Dendritic cell treated with granulocyte-macrophage colony-stimulating factor and Interleukin-4, amounts not matched to agents 40 ng/mL and 50 ng/mL, for 4 days (primary cell): ENCODE measurements at regions of chr12 and their contacts with region 1.

Region 1: GRCh38 chr12:27733052-27733656 is 22.5 kb downstream of the MRPS35 start:
- H3K4me3 Mint-ChIP-seq: no peak overlapping the region
- H3K27ac Mint-ChIP-seq: no peak overlapping the region
- H3K4me1 Mint-ChIP-seq: no peaks in the 10 kb centered on the region
- H3K27me3 Mint-ChIP-seq: no peaks in the 10 kb centered on the region

Region 2: DNA sequence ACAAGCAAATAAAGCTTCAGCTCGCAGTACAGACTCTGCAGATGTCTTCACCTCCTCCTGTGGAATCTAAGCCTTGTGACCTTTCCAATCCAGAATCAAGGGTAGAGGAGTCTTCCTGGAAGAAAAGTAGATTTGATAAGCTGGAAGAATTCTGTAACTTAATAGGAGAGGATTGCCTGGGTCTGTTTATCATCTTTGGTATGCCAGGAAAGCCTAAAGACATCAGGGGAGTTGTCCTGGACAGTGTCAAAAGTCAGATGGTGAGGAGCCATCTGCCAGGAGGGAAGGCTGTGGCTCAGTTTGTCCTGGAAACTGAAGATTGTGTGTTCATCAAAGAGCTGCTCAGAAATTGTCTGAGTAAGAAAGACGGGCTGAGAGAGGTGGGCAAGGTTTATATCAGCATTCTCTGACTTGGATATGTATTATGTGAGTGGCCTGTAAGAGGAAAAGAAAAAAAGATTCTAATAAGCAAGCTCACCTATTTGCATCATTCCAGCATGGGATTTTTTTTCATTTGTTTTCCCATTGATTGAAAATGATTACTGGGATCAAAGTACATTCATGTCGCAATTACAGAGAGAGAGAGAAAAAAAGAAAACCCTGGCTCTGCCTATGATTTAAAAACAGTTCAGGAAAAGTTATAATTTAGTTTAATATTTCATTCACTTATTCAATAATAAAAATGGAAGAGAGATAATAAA is 36.1 kb before region 1 on chr12:
- intact Hi-C with region 1: no loop called
- H3K4me3 Mint-ChIP-seq: no peak overlapping the region
- H3K27ac Mint-ChIP-seq: no peak overlapping the region
- H3K4me1 Mint-ChIP-seq: no peaks in the 10 kb centered on the region
- H3K27me3 Mint-ChIP-seq: no peaks in the 10 kb centered on the region

Region 3: DNA sequence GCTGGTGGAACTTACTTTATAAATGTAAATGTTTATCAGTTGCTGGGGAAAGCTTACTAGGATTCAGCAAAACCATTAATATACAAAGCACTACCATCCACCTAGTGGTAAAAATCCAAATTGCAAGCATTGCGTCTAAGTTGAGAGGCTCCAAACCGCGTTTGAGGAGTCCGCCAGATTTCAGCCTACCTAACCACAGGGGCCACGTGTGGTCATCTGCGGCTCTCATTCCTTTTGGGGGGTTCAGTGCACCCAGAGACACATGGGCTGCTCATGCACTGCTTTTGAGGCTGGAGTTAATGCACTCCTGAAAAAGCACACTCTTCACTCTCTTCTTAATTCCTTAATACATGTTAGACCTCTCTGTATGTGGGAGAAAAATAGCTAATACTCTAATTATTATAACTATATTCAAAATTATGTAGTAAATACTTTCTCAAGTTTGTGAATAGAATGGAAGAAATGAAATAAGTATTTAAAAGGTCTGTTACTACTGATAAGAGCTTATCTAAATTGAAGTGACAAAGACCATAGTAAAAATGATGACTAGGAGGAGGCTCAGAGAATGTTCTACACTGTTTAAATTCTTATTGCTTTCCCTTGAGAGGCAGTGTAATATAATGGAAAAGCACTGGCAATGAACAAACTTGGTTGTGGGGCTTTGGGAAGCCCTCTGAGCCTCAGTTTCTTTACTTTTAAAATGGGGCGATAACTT is 88.3 kb after region 1 on chr12:
- intact Hi-C with region 1: loop called (anchors 1 kb)
- H3K4me3 Mint-ChIP-seq: no peak overlapping the region
- H3K27ac Mint-ChIP-seq: no peak overlapping the region
- H3K4me1 Mint-ChIP-seq: no peaks in the 10 kb centered on the region
- H3K27me3 Mint-ChIP-seq: peaks cover 5% of the 10 kb centered on the region

Region 4: DNA sequence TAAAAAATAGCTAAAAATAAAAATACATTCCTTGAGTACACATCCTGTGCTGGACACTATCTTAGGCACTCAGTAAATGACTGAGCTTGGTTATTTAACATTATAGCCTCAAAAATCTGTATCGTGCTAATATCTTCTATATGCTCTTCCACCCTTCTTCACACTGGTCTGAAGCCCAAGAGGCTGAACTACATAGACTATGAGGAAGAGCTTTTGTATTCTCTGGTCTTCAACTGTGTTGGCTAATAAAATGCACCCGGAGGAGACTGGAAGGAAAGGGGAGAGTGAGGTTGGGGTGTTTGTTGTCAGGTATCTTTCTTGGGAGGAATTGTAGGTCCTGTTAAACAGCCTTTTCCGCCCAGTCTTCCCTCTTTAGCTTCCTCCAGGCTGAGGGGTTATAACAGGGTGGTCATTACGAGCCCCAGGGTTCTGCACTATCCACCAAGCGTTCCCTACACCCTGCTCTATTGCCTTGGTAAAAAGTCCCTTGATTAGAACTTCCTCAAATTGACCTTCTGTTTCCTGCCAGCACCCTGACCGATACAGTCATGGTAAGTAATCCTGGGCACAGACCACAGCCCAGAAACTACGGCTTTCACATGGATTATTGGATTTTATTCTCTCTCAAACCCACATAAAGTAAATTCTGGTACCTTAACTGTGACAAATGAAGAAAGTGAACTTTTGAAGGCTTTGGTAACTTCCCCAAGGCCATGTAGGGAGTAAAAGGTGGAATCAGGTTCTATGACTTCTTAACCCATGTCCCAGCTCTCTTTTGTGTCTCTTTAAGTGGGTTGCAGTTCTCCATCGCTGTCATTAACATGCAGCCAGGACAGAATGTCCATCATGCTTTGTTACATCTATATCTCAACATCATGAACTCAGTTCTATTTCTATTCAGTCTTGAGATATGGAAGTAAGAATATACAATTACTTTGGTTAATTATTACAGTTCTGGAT is 168.0 kb after region 1 on chr12:
- intact Hi-C with region 1: no loop called
- H3K4me3 Mint-ChIP-seq: no peak overlapping the region
- H3K27ac Mint-ChIP-seq: no peak overlapping the region
- H3K4me1 Mint-ChIP-seq: no peaks in the 10 kb centered on the region
- H3K27me3 Mint-ChIP-seq: no peaks in the 10 kb centered on the region

Region 5: DNA sequence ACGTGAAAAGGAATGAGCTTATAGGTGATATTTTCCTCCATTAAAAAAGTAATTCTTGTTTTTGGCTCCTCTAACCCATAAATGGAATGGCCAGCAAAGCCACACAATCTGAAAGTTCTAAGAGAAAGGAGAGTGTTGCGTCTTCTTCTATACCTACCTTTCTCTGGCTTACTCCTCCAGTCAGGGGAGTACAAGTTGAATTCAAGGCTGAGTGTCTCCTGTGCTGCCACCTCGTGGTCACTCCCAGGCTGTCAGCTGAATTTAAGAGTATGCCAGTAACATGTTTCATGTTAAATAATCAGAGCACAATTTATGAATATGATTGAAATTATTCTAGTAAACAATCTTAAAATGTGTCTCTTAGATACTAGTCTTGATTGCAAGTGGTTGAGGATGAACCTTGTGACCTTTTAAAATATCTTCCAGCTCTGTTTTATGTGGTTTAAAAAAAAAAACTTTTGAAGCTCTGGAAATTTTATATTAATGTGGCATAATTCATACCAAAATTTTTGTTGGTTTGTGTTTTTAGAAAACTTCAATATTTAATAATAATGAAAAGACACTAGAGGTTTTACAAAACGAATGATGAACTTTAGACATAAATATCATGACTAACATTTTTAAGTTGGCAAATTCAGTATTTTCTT is 207.7 kb after region 1 on chr12:
- intact Hi-C with region 1: loop called (anchors 2 kb)
- H3K4me3 Mint-ChIP-seq: no peak overlapping the region
- H3K27ac Mint-ChIP-seq: no peak overlapping the region
- H3K4me1 Mint-ChIP-seq: peaks cover 13% of the 10 kb centered on the region
- H3K27me3 Mint-ChIP-seq: peaks cover 3% of the 10 kb centered on the region

Region 6: GRCh38 chr12:28872654-28873268 is 1139.6 kb after region 1 on chr12:
- intact Hi-C with region 1: loop called (anchors 5 kb)
- H3K4me3 Mint-ChIP-seq: no peak overlapping the region
- H3K27ac Mint-ChIP-seq: no peak overlapping the region
- H3K4me1 Mint-ChIP-seq: peaks cover 11% of the 10 kb centered on the region
- H3K27me3 Mint-ChIP-seq: peaks cover 2% of the 10 kb centered on the region